ENCODE measurements at regions of chr3 and their contacts with region 1.

Region 1: DNA sequence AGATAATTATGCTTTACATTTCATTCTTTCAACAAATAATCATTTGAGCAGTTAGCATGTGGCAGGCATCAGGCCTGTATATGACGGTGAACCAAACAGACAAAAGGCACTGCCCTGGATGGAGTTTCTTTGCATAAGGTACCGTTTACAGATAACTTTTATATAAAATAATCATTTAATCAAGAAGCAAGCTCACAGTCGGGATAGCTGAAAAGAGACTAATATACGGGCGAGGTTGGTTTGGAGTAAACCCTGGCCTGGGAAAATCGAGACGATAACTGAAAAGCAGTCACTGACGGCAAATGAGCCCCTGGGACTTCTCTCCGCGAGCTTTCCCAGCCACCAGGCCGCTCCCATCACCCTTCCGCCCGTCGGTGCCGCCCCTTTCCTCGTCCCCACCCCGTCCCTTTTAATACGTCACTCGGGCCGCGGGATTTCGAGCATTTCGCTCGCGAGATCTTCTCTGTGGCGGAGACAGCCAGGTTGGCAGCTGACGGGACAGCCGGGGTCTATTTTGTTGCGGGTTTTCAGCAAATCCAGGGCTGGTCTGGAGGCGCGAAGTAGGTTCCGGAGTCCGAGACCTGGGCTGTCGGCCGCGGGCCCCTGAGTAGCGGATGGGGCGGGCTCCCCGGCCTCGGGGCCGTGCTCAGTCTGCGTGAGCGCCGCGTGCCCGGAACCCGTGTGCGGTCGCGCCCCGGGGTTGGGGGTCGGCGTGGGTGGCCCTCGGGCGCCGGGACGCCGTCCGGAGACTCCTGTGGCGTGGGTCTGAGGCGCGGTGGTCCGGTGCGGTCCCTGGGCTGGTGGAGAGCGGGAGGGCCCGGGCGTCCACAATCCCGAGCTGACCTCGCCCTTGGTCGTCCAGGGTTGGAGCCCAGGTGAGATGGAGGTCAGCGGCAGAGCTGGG is at the start of gene NMD3:
- DNase-seq: peak; percentile 97 to 98
- ATAC-seq: peak; percentile 99
- H3K4me3 ChIP-seq: peak within 1 kb of the TSS; percentile 62 to 78
- H3K27ac ChIP-seq: peak within 1 kb of the TSS; percentile 60 to 70
- H3K4me1 ChIP-seq: no peaks in the 10 kb centered on the region
- H3K27me3 ChIP-seq: no peaks in the 10 kb centered on the region
- total RNA-seq, gene NMD3: 53.8 to 56.5 TPM

Region 2: GRCh38 chr3:161069511-161070263 is 151.4 kb before region 1 on chr3:
- intact Hi-C with region 1: loop called in 1 of 2 experiments (anchors 5 kb)
- DNase-seq: peak in 1 of 2 donors; percentile 51
- ATAC-seq: peak; percentile 83
- H3K4me3 ChIP-seq: no peak overlapping the region
- H3K27ac ChIP-seq: peak overlapping the region in 1 of 2 donors; percentile 50
- H3K4me1 ChIP-seq: peaks cover 0 to 8% of the 10 kb centered on the region in 2 donors
- H3K27me3 ChIP-seq: no peaks in the 10 kb centered on the region

Region 3: GRCh38 chr3:161104561-161105551 is 116.2 kb before region 1 on chr3 and contains the start of gene B3GALNT1:
- intact Hi-C with region 1: loop called in 1 of 2 experiments (anchors 10 kb)
- DNase-seq: peak; percentile 68 to 85
- ATAC-seq: peak; percentile 88
- H3K4me3 ChIP-seq: peak within 1 kb of the TSS; percentile 52
- H3K27ac ChIP-seq: peak within 1 kb of the TSS in 1 of 2 donors; percentile 43
- H3K4me1 ChIP-seq: peaks cover 0 to 2% of the 10 kb centered on the region in 2 donors
- H3K27me3 ChIP-seq: no peaks in the 10 kb centered on the region
- total RNA-seq, gene B3GALNT1: 11.8 to 19.2 TPM

Region 4: GRCh38 chr3:161284989-161285388 is 63.9 kb after region 1 on chr3:
- intact Hi-C with region 1: no loop called
- DNase-seq: no peak
- ATAC-seq: no peak
- H3K4me3 ChIP-seq: no peak overlapping the region
- H3K27ac ChIP-seq: no peak overlapping the region
- H3K4me1 ChIP-seq: no peaks in the 10 kb centered on the region
- H3K27me3 ChIP-seq: no peaks in the 10 kb centered on the region